ENCODE measurements at regions of chr22 and their contacts with region 1.

Region 1: GRCh38 chr22:39236321-39237317 is 8.2 kb downstream of the PDGFB start:
- DNase-seq: peak; percentile 41 to 83 (median 63)
- H3K4me3 ChIP-seq: peak overlapping the region; percentile 55
- H3K4me3 Mint-ChIP-seq: peak overlapping the region; percentile 57 to 93 (median 78)
- H3K27ac ChIP-seq: no peak overlapping the region
- H3K27ac Mint-ChIP-seq: peak overlapping the region; percentile 71 to 98 (median 88)
- H3K4me1 ChIP-seq: peaks cover 67% of the 10 kb centered on the region
- H3K4me1 Mint-ChIP-seq: peaks cover 54 to 75% (median 56%) of the 10 kb centered on the region in 3 donors
- H3K27me3 ChIP-seq: no peaks in the 10 kb centered on the region
- H3K27me3 Mint-ChIP-seq: peaks cover 0 to 6% of the 10 kb centered on the region in 2 donors

Region 2: DNA sequence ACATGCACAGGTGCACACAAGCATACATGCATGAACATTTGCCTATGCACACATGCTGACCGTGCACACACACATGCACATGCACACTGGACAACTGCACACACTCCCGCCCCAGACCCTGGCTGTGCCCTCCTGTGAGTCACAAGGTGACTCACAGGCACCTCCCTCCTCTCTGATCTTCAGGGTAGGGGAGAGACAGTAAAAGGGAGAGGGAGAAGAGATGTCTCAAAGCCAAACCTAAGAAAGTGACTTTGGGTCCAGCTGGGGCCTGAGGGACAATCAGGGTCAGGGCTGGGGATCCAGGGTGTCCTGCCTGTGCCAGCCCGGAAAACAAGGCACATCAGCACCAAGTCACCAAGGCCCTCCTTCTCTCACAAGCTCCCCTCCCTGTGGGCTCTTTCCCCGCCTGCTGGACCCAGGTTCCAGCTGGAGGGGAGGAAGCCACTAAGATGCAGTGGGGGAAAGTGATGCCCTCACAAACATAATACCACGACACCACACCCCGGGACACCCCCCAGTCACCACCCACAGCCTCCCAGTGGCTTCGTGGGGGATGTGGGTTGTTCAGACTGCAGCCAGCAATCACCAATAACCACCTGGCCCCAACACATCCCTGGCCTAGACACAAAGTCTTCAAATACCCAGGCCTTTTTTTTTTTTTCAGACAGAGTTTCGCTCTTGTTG is 31.1 kb before region 1 on chr22:
- CTCF ChIA-PET with region 1: interaction called, 3 read pairs
- POLR2A ChIA-PET with region 1: interaction called, 15 read pairs
- DNase-seq: peak in 4 of 5 donors; percentile 21 to 88 (median 74)
- H3K4me3 ChIP-seq: no peak overlapping the region
- H3K4me3 Mint-ChIP-seq: peak overlapping the region; percentile 44 to 86 (median 71)
- H3K27ac ChIP-seq: no peak overlapping the region
- H3K27ac Mint-ChIP-seq: peak overlapping the region; percentile 84 to 97 (median 90)
- H3K4me1 ChIP-seq: no peaks in the 10 kb centered on the region
- H3K4me1 Mint-ChIP-seq: peaks cover 36 to 50% (median 41%) of the 10 kb centered on the region in 3 donors
- H3K27me3 ChIP-seq: no peaks in the 10 kb centered on the region
- H3K27me3 Mint-ChIP-seq: peaks cover 0 to 7% of the 10 kb centered on the region in 2 donors